IMR-90 (cell line): ENCODE measurements at regions of chr6 and their contacts with region 1.

Region 1: GRCh38 chr6:41591859-41592502 is 45.8 kb downstream of the FOXP4 start:
- DNase-seq: peak; percentile 45
- ATAC-seq: peak; percentile 97
- H3K4me3 ChIP-seq: no peak overlapping the region
- H3K27ac ChIP-seq: no peak overlapping the region
- H3K4me1 ChIP-seq: no peaks in the 10 kb centered on the region
- H3K27me3 ChIP-seq: no peaks in the 10 kb centered on the region
- CTCF ChIP-seq: peak; percentile 98
- POLR2A ChIP-seq: 0 out of 2 replicates have a peak, but pooled peaks have one; percentile 35
- RAD21 ChIP-seq: peak; percentile 97

Region 2: DNA sequence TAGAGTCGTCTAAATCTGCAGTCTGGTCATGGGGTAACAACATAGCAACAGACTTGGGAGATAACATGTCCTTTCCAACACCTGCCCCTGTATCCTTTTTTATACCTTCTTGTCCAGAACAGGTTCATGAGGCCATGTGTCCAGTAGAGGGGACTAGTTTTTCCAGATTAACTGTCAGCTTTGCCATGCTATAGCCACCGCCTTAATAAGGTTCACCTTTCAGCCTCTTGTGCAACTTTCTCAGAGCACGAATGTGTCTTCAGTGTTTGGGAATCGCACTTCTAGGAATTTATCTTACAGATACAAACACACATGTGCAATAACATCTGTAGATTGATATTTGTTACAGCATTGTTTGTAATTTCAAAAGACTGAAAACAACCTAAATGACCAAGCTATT is 235.2 kb before region 1 on chr6:
- CTCF ChIA-PET with region 1: no interaction called
- POLR2A ChIA-PET with region 1: no interaction called
- dilution Hi-C with region 1: no loop called
- in situ Hi-C with region 1: no loop called
- intact Hi-C with region 1: no loop called
- DNase-seq: no peak
- ATAC-seq: no peak
- H3K4me3 ChIP-seq: no peak overlapping the region
- H3K27ac ChIP-seq: no peak overlapping the region
- H3K4me1 ChIP-seq: no peaks in the 10 kb centered on the region
- H3K27me3 ChIP-seq: peaks cover 12% of the 10 kb centered on the region
- CTCF ChIP-seq: no peak
- POLR2A ChIP-seq: no peak
- RAD21 ChIP-seq: no peak

Region 3: GRCh38 chr6:41367700-41368099 is 224.3 kb before region 1 on chr6:
- CTCF ChIA-PET with region 1: no interaction called
- POLR2A ChIA-PET with region 1: no interaction called
- dilution Hi-C with region 1: no loop called
- in situ Hi-C with region 1: loop called (anchors 5 kb)
- intact Hi-C with region 1: loop called (anchors 1 kb)
- DNase-seq: peak; percentile 48
- ATAC-seq: peak; percentile 82
- H3K4me3 ChIP-seq: no peak overlapping the region
- H3K27ac ChIP-seq: no peak overlapping the region
- H3K4me1 ChIP-seq: no peaks in the 10 kb centered on the region; the same call in 1 of the 2 replicates
- H3K27me3 ChIP-seq: peaks cover 29% of the 10 kb centered on the region
- CTCF ChIP-seq: peak; percentile 77
- POLR2A ChIP-seq: no peak
- RAD21 ChIP-seq: peak; percentile 79

Region 4: DNA sequence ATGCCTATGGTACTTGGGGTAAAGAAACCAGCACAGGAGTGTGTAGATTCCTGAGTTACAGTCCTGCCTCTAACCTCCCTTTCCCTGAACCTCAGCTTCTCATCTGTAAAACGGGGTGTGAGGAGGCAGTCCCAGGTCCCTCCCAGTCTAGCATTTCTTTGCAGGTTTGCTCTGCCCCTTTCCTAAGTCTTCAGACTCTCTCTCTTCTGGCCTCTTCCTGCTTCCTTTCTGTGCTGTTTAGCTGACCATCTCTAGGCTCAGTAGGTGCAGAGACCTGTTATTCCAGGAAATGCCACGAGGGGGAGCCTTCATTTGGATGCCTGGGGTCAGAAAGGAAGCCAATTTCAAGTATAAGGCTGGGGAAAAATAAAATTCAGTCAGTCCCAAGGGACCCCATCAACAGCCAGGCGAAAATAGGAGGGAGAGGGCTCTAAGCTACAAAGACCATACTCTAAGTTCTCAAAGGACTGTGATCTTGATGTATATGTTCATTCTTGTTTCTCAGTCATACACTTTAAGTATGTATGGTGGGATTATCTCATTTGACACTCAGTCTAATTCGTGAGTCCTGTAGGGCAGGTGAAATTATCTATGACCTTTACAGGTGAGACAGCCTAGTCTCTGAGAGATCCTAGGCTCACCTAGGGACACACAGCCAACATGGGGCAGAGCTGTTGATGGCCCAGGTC is 167.5 kb before region 1 on chr6:
- CTCF ChIA-PET with region 1: interaction called, 3 read pairs
- POLR2A ChIA-PET with region 1: no interaction called
- dilution Hi-C with region 1: no loop called
- in situ Hi-C with region 1: loop called (anchors 5 kb)
- intact Hi-C with region 1: loop called (anchors 1 kb)
- DNase-seq: peak; percentile 71
- ATAC-seq: peak; percentile 91
- H3K4me3 ChIP-seq: no peak overlapping the region
- H3K27ac ChIP-seq: no peak overlapping the region
- H3K4me1 ChIP-seq: 0 out of 2 replicates have a peak, but pooled peaks cover 1% of the 10 kb centered on the region
- H3K27me3 ChIP-seq: peaks cover 68% of the 10 kb centered on the region
- CTCF ChIP-seq: peak; percentile 85
- POLR2A ChIP-seq: no peak
- RAD21 ChIP-seq: peak; percentile 78

Region 5: DNA sequence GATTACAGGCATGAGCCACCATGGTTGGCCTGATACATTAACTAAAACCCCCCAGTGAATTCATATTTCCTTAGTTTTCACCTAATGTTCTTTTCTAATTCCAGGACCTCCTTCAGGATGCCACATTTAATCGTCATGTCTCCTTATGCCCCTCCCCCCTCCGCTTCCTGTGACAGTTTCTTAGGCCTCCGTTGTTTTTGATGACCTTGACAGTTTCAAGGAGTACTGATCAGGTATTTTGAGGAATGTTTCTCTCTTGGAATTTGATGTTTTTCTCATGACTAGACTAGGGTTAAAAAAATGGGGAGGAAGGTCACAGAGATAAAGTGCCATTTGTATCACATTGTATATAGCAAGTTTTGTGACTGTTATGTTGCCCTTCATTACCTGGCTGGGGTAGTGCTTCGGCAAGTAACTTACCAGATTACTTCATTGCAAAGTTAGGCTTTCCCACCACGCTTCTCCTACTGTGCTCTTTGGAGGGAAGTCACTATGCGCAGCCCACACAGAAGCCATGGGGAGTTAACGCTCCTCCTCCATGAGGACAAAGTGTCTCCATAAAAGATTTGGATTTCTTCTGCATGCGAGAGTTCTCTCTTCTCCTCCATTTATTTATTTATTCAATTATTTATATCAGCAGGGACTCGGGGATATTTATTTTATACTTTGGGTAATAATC is 157.0 kb before region 1 on chr6:
- CTCF ChIA-PET with region 1: no interaction called
- POLR2A ChIA-PET with region 1: no interaction called
- dilution Hi-C with region 1: no loop called
- in situ Hi-C with region 1: no loop called
- intact Hi-C with region 1: no loop called
- DNase-seq: no peak
- ATAC-seq: no peak
- H3K4me3 ChIP-seq: no peak overlapping the region
- H3K27ac ChIP-seq: no peak overlapping the region
- H3K4me1 ChIP-seq: peaks cover 4% of the 10 kb centered on the region
- H3K27me3 ChIP-seq: peaks cover 33% of the 10 kb centered on the region
- CTCF ChIP-seq: no peak
- POLR2A ChIP-seq: no peak
- RAD21 ChIP-seq: no peak

Region 6: GRCh38 chr6:41463062-41463930 is 128.7 kb before region 1 on chr6:
- CTCF ChIA-PET with region 1: interaction called, 3 read pairs
- POLR2A ChIA-PET with region 1: interaction called, 5 read pairs
- dilution Hi-C with region 1: no loop called
- in situ Hi-C with region 1: loop called (anchors 10 kb)
- intact Hi-C with region 1: loop called (anchors 1 kb)
- DNase-seq: peak; percentile 77
- ATAC-seq: peak; percentile 99
- H3K4me3 ChIP-seq: no peak overlapping the region
- H3K27ac ChIP-seq: no peak overlapping the region
- H3K4me1 ChIP-seq: no peaks in the 10 kb centered on the region
- H3K27me3 ChIP-seq: peaks cover 27% of the 10 kb centered on the region
- CTCF ChIP-seq: peak; percentile 92
- POLR2A ChIP-seq: 0 out of 2 replicates have a peak, but pooled peaks have one; percentile 32
- RAD21 ChIP-seq: peak; percentile 91

Region 7: GRCh38 chr6:41545703-41546474 is 46.1 kb before region 1 on chr6 and contains the start of gene FOXP4:
- CTCF ChIA-PET with region 1: no interaction called
- POLR2A ChIA-PET with region 1: no interaction called
- dilution Hi-C with region 1: no loop called
- in situ Hi-C with region 1: no loop called
- intact Hi-C with region 1: loop called (anchors 2 kb)
- DNase-seq: peak; percentile 95
- ATAC-seq: peak; percentile 89
- H3K4me3 ChIP-seq: peak within 1 kb of the TSS; percentile 93
- H3K27ac ChIP-seq: peak within 1 kb of the TSS; percentile 34; the same call in 1 of the 2 replicates
- H3K4me1 ChIP-seq: peaks cover 8% of the 10 kb centered on the region
- H3K27me3 ChIP-seq: peaks cover 6% of the 10 kb centered on the region; the same call in 1 of the 2 replicates
- CTCF ChIP-seq: no peak
- POLR2A ChIP-seq: no peak
- RAD21 ChIP-seq: no peak
- total RNA-seq, gene FOXP4: 0.72 and 0.83 TPM in 2 replicates

Region 8: GRCh38 chr6:41608443-41609151 is 16.6 kb after region 1 on chr6:
- CTCF ChIA-PET with region 1: no interaction called
- POLR2A ChIA-PET with region 1: no interaction called
- dilution Hi-C with region 1: no loop called
- in situ Hi-C with region 1: no loop called
- intact Hi-C with region 1: no loop called
- DNase-seq: no peak
- ATAC-seq: no peak
- H3K4me3 ChIP-seq: no peak overlapping the region
- H3K27ac ChIP-seq: no peak overlapping the region
- H3K4me1 ChIP-seq: no peaks in the 10 kb centered on the region
- H3K27me3 ChIP-seq: peaks cover 2% of the 10 kb centered on the region
- CTCF ChIP-seq: no peak
- POLR2A ChIP-seq: no peak
- RAD21 ChIP-seq: no peak

Region 9: DNA sequence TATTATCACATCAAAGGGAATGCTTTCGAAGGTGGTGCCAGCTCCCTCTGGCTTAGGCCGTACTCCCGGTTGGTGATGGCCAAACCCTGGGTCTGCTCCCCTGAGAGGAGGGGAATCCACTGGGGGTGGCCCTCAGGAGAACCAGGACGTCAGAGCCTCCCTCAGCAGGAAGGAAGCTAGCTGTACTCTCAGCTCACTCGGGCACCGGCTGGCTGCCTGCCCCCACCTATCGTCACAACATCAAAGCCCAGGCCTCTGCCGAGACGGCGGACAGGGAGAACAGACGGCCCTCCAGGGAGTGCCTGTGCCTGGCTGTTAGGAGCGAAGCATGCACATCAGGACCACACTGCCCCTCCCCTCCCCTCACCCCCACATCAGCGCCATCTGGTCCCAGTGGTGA is 164.4 kb after region 1 on chr6:
- CTCF ChIA-PET with region 1: no interaction called
- POLR2A ChIA-PET with region 1: no interaction called
- dilution Hi-C with region 1: no loop called
- in situ Hi-C with region 1: no loop called
- intact Hi-C with region 1: no loop called
- DNase-seq: no peak
- ATAC-seq: no peak
- H3K4me3 ChIP-seq: no peak overlapping the region
- H3K27ac ChIP-seq: no peak overlapping the region
- H3K4me1 ChIP-seq: peaks cover 3% of the 10 kb centered on the region; the same call in 1 of the 2 replicates
- H3K27me3 ChIP-seq: peaks cover 34% of the 10 kb centered on the region
- CTCF ChIP-seq: no peak
- POLR2A ChIP-seq: no peak
- RAD21 ChIP-seq: no peak